Activated CD8-positive, alpha-beta memory T cell treated with anti-CD3 and anti-CD28 coated beads, Interleukin-2, amount 10 ng/mL, durations not matched to agents 7 days and 5 days (primary cell): ENCODE measurements at regions of chr14 and their contacts with region 1.

Region 1: GRCh38 chr14:100654814-100655740 is 67.9 kb upstream of the BEGAIN start:
- DNase-seq: peak; percentile 54
- ATAC-seq: peak; percentile 84
- H3K4me3 Mint-ChIP-seq: no peak overlapping the region
- H3K27ac Mint-ChIP-seq: no peak overlapping the region
- H3K4me1 Mint-ChIP-seq: peaks cover 3% of the 10 kb centered on the region
- H3K27me3 Mint-ChIP-seq: peaks cover 31% of the 10 kb centered on the region

Region 2: GRCh38 chr14:100383727-100384158 is 271.3 kb before region 1 on chr14:
- CTCF ChIA-PET with region 1: interaction called, 123 read pairs
- DNase-seq: peak; percentile 77
- ATAC-seq: peak; percentile 88
- H3K4me3 Mint-ChIP-seq: no peak overlapping the region
- H3K27ac Mint-ChIP-seq: no peak overlapping the region
- H3K4me1 Mint-ChIP-seq: peaks cover 6% of the 10 kb centered on the region
- H3K27me3 Mint-ChIP-seq: no peaks in the 10 kb centered on the region

Region 3: GRCh38 chr14:100440187-100440631 is 214.9 kb before region 1 on chr14:
- CTCF ChIA-PET with region 1: interaction called, 48 read pairs
- DNase-seq: peak; percentile 66
- ATAC-seq: peak; percentile 68
- H3K4me3 Mint-ChIP-seq: no peak overlapping the region
- H3K27ac Mint-ChIP-seq: no peak overlapping the region
- H3K4me1 Mint-ChIP-seq: peaks cover 28% of the 10 kb centered on the region
- H3K27me3 Mint-ChIP-seq: no peaks in the 10 kb centered on the region

Region 4: GRCh38 chr14:100446572-100446971 is 208.5 kb before region 1 on chr14:
- CTCF ChIA-PET with region 1: interaction called, 48 read pairs
- DNase-seq: peak; percentile 56
- ATAC-seq: peak; percentile 75
- H3K4me3 Mint-ChIP-seq: no peak overlapping the region
- H3K27ac Mint-ChIP-seq: no peak overlapping the region
- H3K4me1 Mint-ChIP-seq: peaks cover 23% of the 10 kb centered on the region
- H3K27me3 Mint-ChIP-seq: no peaks in the 10 kb centered on the region

Region 5: DNA sequence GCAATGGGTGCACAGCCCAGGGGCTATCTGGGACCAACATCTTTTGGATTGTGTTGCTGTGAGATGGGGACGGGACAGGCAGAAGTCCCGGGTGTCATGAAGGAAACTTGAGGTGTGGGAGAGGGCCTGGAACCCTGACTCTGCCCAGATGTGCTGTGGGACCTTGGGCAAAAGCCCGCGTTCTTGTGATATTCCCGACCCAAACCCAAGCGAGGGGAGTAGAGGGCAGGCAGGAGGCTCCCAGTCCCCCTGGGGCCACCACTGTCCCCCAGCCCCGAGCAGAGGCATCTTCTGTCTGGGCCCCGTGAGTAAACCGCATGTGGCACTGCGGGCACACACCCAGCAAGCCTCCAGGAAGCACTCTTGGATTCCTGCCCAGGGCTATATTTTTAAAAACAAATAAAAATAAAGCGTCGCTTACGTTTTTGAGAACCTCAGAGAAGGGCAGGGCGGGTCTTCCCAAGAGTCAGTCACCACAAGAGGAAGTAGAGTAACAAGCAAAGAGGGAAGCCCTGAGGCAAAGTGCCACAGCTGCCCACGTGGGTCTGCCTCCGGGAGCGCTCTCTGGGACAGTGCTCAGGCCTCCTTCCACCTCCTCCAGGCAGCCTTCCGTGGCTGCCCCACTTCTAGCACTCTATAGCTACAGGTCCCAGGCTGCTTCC is 107.3 kb before region 1 on chr14:
- CTCF ChIA-PET with region 1: interaction called, 12 read pairs
- DNase-seq: peak; percentile 64
- ATAC-seq: peak; percentile 22
- H3K4me3 Mint-ChIP-seq: peak overlapping the region; percentile 20
- H3K27ac Mint-ChIP-seq: peak overlapping the region; percentile 84
- H3K4me1 Mint-ChIP-seq: peaks cover 35% of the 10 kb centered on the region
- H3K27me3 Mint-ChIP-seq: no peaks in the 10 kb centered on the region

Region 6: DNA sequence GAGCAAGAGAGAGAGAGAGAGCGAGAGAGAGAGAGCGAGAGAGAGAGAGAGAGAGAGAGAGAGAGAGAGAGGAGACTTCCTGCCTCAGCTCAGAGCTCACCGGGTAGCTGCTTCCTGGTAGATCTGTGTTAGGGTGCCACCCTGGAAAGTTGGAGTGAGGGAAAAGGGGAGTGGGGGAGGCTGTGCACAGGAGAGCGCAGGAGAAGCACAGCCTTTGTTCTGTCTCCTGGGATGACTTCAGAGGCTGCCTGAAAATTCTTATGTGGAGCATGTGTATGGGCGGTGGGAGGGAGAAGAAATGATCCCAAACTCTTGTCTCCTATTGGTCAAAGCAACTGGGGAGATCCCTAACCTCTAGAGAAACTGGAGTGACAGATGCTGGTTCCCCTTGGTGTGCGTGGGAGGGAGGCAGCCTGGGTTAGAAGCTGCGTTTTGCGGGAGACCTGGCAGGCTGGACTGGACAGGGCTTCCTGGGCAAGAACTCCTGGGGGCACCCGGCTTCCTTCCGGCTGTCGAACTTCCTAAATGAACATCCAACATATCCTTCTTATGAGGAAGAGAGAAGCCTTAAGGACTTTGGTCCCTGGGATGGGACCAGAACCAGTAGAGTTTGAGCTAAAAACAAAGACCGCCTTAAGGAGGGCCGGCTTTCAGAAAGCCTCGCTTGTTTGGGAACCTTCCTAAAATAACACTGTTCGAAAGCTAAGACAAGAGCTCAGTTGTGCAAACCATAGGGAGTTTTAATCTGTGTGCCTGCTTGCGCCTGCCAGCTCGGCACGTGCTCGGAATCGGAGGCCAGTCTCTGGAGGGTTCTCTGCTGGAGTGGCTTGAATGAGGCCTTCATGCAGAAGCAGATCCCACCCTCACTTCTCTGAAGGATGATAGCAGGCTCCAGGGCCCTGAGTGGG is 37.4 kb before region 1 on chr14:
- CTCF ChIA-PET with region 1: interaction called, 19 read pairs
- DNase-seq: no peak
- ATAC-seq: peak; percentile 42
- H3K4me3 Mint-ChIP-seq: no peak overlapping the region
- H3K27ac Mint-ChIP-seq: peak overlapping the region; percentile 10
- H3K4me1 Mint-ChIP-seq: peaks cover 10% of the 10 kb centered on the region
- H3K27me3 Mint-ChIP-seq: peaks cover 18% of the 10 kb centered on the region

Region 7: DNA sequence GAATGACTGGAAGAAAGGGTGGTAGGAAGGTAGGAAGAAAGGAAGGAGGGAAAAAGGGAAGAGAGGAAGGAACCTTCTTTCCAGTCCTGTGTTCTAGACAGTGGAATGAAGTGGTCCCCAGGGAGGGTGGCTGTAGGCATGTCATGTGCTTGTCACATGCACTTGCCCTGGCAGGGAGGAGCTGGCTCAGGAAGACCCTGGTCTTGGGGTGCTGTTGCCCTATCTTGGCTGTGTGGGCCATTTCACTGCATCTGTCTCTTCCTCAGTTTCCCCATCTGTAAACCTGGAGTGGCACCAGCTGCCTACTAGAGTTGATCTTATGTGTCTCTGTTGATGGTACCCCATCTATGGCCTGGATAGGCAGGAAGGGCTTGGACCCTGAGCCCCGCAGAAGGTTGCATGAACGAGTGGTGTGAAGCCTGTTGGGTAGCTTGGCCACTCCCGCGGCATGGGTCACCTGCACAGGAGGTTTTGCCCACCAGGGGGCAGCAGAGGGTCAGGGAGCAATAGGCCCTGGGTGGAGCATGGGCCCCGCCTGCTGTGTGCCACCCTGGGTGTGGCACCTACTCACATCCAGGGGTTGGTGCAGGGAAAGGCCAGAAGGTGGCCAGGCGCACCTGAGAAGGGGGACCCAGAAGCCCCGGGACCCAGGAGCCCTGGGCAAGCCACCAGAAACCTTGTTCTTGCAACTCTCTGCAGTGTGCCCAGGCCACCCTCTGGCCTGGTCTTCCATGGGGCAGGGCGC is 195.9 kb after region 1 on chr14:
- CTCF ChIA-PET with region 1: no interaction called
- DNase-seq: peak; percentile 85
- ATAC-seq: peak; percentile 86
- H3K4me3 Mint-ChIP-seq: no peak overlapping the region
- H3K27ac Mint-ChIP-seq: no peak overlapping the region
- H3K4me1 Mint-ChIP-seq: no peaks in the 10 kb centered on the region
- H3K27me3 Mint-ChIP-seq: no peaks in the 10 kb centered on the region